Psoas muscle (tissue), 8 donors: ENCODE measurements at regions of chr9 and their contacts with region 1.

Region 1: DNA sequence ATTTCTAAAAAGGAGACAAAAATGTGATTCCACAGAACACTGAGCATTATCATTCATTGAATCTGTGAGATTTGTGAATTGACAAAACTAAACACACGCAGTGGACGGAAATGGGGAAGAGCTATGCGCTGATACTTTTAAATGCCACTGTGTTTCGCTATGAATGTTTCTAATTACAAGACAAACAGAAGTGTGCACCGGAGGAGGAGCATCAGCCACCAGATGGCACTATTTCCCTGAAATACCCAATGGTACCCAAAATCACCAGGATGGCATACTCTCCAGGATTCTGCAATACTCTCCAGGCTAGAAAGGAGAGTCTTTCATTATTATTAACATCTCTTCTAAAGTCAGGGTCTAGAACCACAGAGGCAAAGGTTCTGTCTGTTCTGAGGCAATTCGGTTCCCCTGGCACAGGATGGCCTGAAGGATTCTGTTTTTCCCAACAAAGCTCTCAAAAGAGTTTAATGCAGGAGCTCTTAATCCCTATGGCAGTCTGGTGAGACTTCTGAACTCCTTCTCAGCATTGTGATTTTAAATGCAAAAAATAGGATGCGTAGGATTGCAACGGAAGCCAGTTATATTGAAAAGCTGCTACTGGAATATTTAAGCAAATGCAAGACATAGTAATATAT is 13.8 kb upstream of the PUM3 start:
- DNase-seq: peak in 1 of 2 donors; percentile 23
- ATAC-seq: peak in 3 of 4 donors; percentile 49 to 80 (median 57)
- H3K4me3 ChIP-seq: no peak overlapping the region
- H3K27ac ChIP-seq: no peak overlapping the region
- H3K4me1 ChIP-seq: no peaks in the 10 kb centered on the region
- H3K27me3 ChIP-seq: no peaks in the 10 kb centered on the region
- CTCF ChIP-seq: peak; percentile 79

Region 2: GRCh38 chr9:2461892-2462291 is 395.8 kb before region 1 on chr9:
- intact Hi-C with region 1: no loop called
- DNase-seq: no peak
- ATAC-seq: no peak
- H3K4me3 ChIP-seq: no peak overlapping the region
- H3K27ac ChIP-seq: no peak overlapping the region
- H3K4me1 ChIP-seq: peaks cover 8% of the 10 kb centered on the region
- H3K27me3 ChIP-seq: no peaks in the 10 kb centered on the region
- CTCF ChIP-seq: no peak

Region 3: GRCh38 chr9:2798423-2798822 is 59.3 kb before region 1 on chr9:
- intact Hi-C with region 1: no loop called
- DNase-seq: no peak
- ATAC-seq: peak in 2 of 4 donors; percentile 56 to 69
- H3K4me3 ChIP-seq: no peak overlapping the region
- H3K27ac ChIP-seq: no peak overlapping the region
- H3K4me1 ChIP-seq: peaks cover 7% of the 10 kb centered on the region
- H3K27me3 ChIP-seq: no peaks in the 10 kb centered on the region
- CTCF ChIP-seq: no peak

Region 4: DNA sequence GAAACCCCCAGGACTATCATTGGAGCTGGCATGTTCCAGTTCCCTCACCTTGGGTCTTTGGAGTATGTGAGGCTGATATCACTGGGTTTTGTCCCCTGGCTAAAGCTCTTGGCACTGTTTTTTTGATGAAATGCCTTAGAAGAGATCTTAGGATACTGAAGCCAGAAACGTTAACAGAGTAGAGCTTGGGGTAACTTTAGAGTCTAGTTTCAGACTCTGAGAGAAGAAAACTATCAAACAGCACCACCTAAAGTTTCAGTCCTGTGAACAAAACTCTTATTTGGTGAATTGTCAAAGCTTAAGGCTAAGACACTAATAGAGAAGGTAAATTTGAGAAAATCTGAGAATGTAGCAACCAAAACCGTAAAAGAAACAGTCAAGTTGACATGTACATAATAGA is 97.9 kb after region 1 on chr9:
- intact Hi-C with region 1: loop called in 1 of 2 experiments (anchors 5 kb)
- DNase-seq: no peak
- ATAC-seq: no peak
- H3K4me3 ChIP-seq: no peak overlapping the region
- H3K27ac ChIP-seq: no peak overlapping the region
- H3K4me1 ChIP-seq: no peaks in the 10 kb centered on the region
- H3K27me3 ChIP-seq: no peaks in the 10 kb centered on the region
- CTCF ChIP-seq: no peak

Region 5: DNA sequence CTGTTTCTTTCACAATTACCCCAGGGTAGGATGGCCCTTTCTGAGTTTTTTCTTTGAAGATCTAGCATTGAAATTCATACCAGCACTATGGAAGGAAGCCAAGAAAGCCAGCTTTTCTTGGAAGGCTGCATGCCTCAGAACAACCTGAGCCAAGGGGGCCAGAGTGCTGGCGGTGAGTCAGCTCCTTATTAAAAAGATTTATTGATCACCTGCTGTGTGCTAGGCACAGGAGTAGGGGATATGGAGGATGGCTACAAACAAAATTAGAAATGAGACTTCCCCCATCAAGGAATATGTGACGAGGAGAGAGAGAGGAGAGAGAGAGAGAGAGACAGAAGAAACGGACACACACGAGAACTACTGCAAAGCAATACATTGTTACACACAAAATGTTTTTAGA is 170.9 kb after region 1 on chr9:
- intact Hi-C with region 1: no loop called
- DNase-seq: no peak
- ATAC-seq: no peak
- H3K4me3 ChIP-seq: no peak overlapping the region
- H3K27ac ChIP-seq: no peak overlapping the region
- H3K4me1 ChIP-seq: no peaks in the 10 kb centered on the region
- H3K27me3 ChIP-seq: no peaks in the 10 kb centered on the region
- CTCF ChIP-seq: no peak

Region 6: GRCh38 chr9:3181049-3181953 is 323.6 kb after region 1 on chr9:
- intact Hi-C with region 1: loop called (anchors 5 kb)
- DNase-seq: peak; percentile 17 to 55
- ATAC-seq: peak; percentile 48 to 83 (median 61)
- H3K4me3 ChIP-seq: peak overlapping the region; percentile 54
- H3K27ac ChIP-seq: no peak overlapping the region
- H3K4me1 ChIP-seq: peaks cover 5% of the 10 kb centered on the region
- H3K27me3 ChIP-seq: peaks cover 0 to 30% (median 4%) of the 10 kb centered on the region in 3 donors
- CTCF ChIP-seq: peak; percentile 14

Region 7: DNA sequence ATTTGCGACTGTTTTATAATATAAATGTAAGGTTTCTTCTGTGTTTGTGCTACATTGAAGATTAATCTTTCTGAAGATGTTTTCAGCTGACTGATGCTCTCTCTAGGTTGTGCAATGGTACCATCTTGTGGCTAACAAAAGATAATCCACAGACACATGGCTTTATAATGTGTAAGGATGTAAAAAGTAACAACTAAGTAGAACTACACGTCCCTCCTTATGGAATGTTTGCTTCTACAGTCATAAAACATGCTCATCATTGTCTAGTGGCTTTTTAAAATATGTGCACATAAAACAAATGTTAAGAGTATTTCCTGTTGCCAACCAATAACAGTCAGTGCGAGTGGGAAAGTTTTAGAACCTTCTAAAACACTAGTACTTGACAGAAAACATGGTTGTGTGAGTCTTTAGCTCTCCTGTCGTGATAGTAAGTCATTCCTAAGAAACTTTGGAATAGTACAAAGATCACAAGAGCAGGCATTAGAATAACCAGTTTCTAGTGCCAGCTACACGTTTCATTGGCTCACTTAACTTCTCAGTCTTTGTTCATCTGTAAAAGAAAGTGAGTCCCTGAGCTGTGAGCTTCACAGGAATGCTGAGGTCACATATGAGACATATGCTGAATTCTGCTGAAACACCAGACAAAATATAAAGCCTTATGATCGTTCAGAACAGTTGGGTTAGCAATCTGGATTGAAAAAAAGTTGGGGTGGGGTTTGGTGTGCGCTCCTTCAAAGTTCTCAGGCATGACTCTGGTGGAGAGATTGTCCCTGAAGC is 1517.9 kb after region 1 on chr9:
- intact Hi-C with region 1: loop called in 1 of 2 experiments (anchors 10 kb)
- DNase-seq: no peak
- ATAC-seq: no peak
- H3K4me3 ChIP-seq: no peak overlapping the region
- H3K27ac ChIP-seq: no peak overlapping the region
- H3K4me1 ChIP-seq: no peaks in the 10 kb centered on the region
- H3K27me3 ChIP-seq: peaks cover 0 to 4% (median 2%) of the 10 kb centered on the region in 3 donors
- CTCF ChIP-seq: peak; percentile 38